ENCODE measurements at regions of chr4 and their contacts with region 1.

Region 1: GRCh38 chr4:73729534-73730165 is 10.7 kb upstream of the CXCL8 start:
- DNase-seq: peak; percentile 85
- H3K4me3 ChIP-seq: no peak overlapping the region
- H3K27ac ChIP-seq: peak overlapping the region; percentile 10
- H3K4me1 ChIP-seq: peaks cover 69% of the 10 kb centered on the region
- H3K27me3 ChIP-seq: no peaks in the 10 kb centered on the region
- CTCF ChIP-seq: peak; percentile 79 to 87
- POLR2A ChIP-seq: no peak

Region 2: GRCh38 chr4:73704314-73705055 is 25.2 kb before region 1 on chr4:
- CTCF ChIA-PET with region 1: interaction called, 12 read pairs
- POLR2A ChIA-PET with region 1: no interaction called
- dilution Hi-C with region 1: no loop called
- intact Hi-C with region 1: loop called (anchors 1 kb)
- DNase-seq: peak; percentile 99
- H3K4me3 ChIP-seq: no peak overlapping the region
- H3K27ac ChIP-seq: peak overlapping the region; percentile 70
- H3K4me1 ChIP-seq: peaks cover 61% of the 10 kb centered on the region
- H3K27me3 ChIP-seq: no peaks in the 10 kb centered on the region
- CTCF ChIP-seq: no peak
- POLR2A ChIP-seq: no peak

Region 3: GRCh38 chr4:73740353-73740778 is 10.7 kb after region 1 on chr4 and contains the start of gene CXCL8:
- CTCF ChIA-PET with region 1: interaction called, 31 read pairs
- POLR2A ChIA-PET with region 1: no interaction called
- dilution Hi-C with region 1: no loop called
- intact Hi-C with region 1: loop called (anchors 1 kb)
- DNase-seq: peak; percentile 94
- H3K4me3 ChIP-seq: peak within 1 kb of the TSS in 2 of 3 experiments; percentile 20 to 62
- H3K27ac ChIP-seq: peak within 1 kb of the TSS; percentile 75
- H3K4me1 ChIP-seq: peaks cover 28% of the 10 kb centered on the region
- H3K27me3 ChIP-seq: no peaks in the 10 kb centered on the region
- CTCF ChIP-seq: no peak
- POLR2A ChIP-seq: peak; percentile 73
- total RNA-seq, gene CXCL8: 5.2 and 12.6 TPM in 2 replicates

Region 4: GRCh38 chr4:73788411-73788810 is 58.8 kb after region 1 on chr4:
- CTCF ChIA-PET with region 1: no interaction called
- POLR2A ChIA-PET with region 1: no interaction called
- dilution Hi-C with region 1: no loop called
- intact Hi-C with region 1: no loop called
- DNase-seq: no peak
- H3K4me3 ChIP-seq: no peak overlapping the region
- H3K27ac ChIP-seq: no peak overlapping the region
- H3K4me1 ChIP-seq: no peaks in the 10 kb centered on the region
- H3K27me3 ChIP-seq: no peaks in the 10 kb centered on the region
- CTCF ChIP-seq: no peak
- POLR2A ChIP-seq: no peak

Region 5: DNA sequence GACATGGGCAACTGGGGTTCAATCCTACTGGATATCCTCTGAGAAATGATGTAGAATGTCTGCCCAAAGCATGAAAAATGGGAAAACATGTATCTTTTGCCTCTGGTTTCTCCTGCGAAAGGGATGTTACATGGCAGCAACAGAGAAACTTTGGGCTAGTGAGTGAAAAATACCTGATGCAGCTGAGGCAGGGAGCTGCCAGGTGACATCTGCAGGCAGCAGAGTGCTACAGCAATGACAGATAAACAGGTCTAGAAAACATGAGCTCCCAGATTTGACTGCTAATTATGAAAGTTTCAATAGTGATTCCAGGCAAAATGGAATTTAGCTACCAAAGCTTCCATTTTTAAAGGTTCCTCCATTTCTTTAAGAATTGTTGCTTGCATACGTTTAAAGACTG is 134.7 kb after region 1 on chr4:
- CTCF ChIA-PET with region 1: interaction called, 26 read pairs
- POLR2A ChIA-PET with region 1: no interaction called
- dilution Hi-C with region 1: no loop called
- intact Hi-C with region 1: loop called (anchors 1 kb)
- DNase-seq: peak; percentile 18
- H3K4me3 ChIP-seq: no peak overlapping the region
- H3K27ac ChIP-seq: no peak overlapping the region
- H3K4me1 ChIP-seq: peaks cover 8% of the 10 kb centered on the region
- H3K27me3 ChIP-seq: no peaks in the 10 kb centered on the region
- CTCF ChIP-seq: peak; percentile 10 to 31
- POLR2A ChIP-seq: no peak

Region 6: GRCh38 chr4:73922766-73923630 is 193.3 kb after region 1 on chr4:
- CTCF ChIA-PET with region 1: interaction called, 11 read pairs
- POLR2A ChIA-PET with region 1: no interaction called
- dilution Hi-C with region 1: no loop called
- intact Hi-C with region 1: loop called (anchors 1 kb)
- DNase-seq: peak; percentile 76
- H3K4me3 ChIP-seq: no peak overlapping the region
- H3K27ac ChIP-seq: no peak overlapping the region
- H3K4me1 ChIP-seq: peaks cover 10% of the 10 kb centered on the region
- H3K27me3 ChIP-seq: no peaks in the 10 kb centered on the region
- CTCF ChIP-seq: peak; percentile 9 to 14
- POLR2A ChIP-seq: no peak

Region 7: GRCh38 chr4:74056858-74057562 is 327.4 kb after region 1 on chr4:
- CTCF ChIA-PET with region 1: no interaction called
- POLR2A ChIA-PET with region 1: no interaction called
- dilution Hi-C with region 1: no loop called
- intact Hi-C with region 1: no loop called
- DNase-seq: peak; percentile 20
- H3K4me3 ChIP-seq: no peak overlapping the region
- H3K27ac ChIP-seq: no peak overlapping the region
- H3K4me1 ChIP-seq: no peaks in the 10 kb centered on the region
- H3K27me3 ChIP-seq: no peaks in the 10 kb centered on the region
- CTCF ChIP-seq: no peak
- POLR2A ChIP-seq: no peak

Region 8: GRCh38 chr4:74098450-74098994 is 368.9 kb after region 1 on chr4:
- CTCF ChIA-PET with region 1: no interaction called
- POLR2A ChIA-PET with region 1: no interaction called
- dilution Hi-C with region 1: no loop called
- intact Hi-C with region 1: loop called (anchors 2 kb)
- DNase-seq: peak; percentile 38
- H3K4me3 ChIP-seq: peak overlapping the region; percentile 46 to 85 (median 69)
- H3K27ac ChIP-seq: peak overlapping the region; percentile 83
- H3K4me1 ChIP-seq: peaks cover 32% of the 10 kb centered on the region
- H3K27me3 ChIP-seq: no peaks in the 10 kb centered on the region
- CTCF ChIP-seq: no peak
- POLR2A ChIP-seq: no peak

Measured in endothelial cell of umbilical vein (primary cell).